Activated CD8-positive, alpha-beta memory T cell treated with anti-CD3 and anti-CD28 coated beads, Interleukin-2, amount 10 ng/mL, durations not matched to agents 7 days and 5 days (primary cell): ENCODE measurements at regions of chr1 and their contacts with region 1.

Region 1: DNA sequence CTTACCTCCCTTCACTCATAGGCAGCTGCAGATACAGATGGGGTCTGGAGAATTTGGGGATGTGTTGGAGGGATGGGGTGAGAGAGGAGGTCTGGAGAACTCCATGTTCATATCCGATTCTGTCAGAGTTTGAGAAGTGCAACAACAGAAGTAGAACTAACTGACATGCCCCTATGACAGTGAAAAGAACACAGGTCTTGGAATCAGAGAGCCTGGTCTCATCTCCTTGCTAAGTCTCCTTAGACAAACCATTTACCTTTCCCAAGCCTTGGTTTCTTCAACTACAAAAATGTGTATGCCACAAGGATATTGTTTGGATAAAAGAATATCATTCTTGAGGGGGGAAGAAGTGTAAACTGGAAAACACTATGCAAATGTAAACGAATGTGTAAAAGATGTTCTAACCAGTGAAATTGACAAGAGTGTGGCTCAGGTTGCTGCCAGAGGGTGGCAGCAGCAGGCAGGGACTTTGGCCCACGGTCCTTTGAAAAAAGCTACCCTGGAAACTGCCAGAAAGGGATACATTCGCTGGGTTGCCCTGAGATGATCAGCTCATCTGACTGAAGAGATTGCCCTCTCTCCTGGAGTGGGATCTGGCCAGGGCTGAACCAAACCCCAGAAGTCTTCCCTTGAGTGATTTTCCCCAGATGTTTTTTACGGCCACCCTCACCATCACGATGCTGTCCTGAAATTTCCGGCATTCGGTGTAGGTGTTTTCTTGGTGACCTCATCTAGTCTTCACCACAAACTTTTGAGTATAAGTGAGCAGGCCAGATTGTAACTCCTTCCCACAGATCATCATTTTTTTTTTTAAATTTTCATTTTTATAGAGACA is 17.0 kb upstream of the CD2 start:
- DNase-seq: peak; percentile 89
- ATAC-seq: peak; percentile 59
- H3K4me3 Mint-ChIP-seq: peak overlapping the region; percentile 69
- H3K27ac Mint-ChIP-seq: peak overlapping the region; percentile 99
- H3K4me1 Mint-ChIP-seq: peaks cover 59% of the 10 kb centered on the region
- H3K27me3 Mint-ChIP-seq: no peaks in the 10 kb centered on the region

Region 2: GRCh38 chr1:116693759-116694482 is 43.3 kb before region 1 on chr1:
- CTCF ChIA-PET with region 1: no interaction called
- DNase-seq: no peak
- ATAC-seq: no peak
- H3K4me3 Mint-ChIP-seq: no peak overlapping the region
- H3K27ac Mint-ChIP-seq: no peak overlapping the region
- H3K4me1 Mint-ChIP-seq: no peaks in the 10 kb centered on the region
- H3K27me3 Mint-ChIP-seq: no peaks in the 10 kb centered on the region

Region 3: GRCh38 chr1:116763787-116764465 is 26.7 kb after region 1 on chr1:
- CTCF ChIA-PET with region 1: interaction called, 317 read pairs
- DNase-seq: peak; percentile 83
- ATAC-seq: peak; percentile 20
- H3K4me3 Mint-ChIP-seq: peak overlapping the region; percentile 65
- H3K27ac Mint-ChIP-seq: peak overlapping the region; percentile 97
- H3K4me1 Mint-ChIP-seq: peaks cover 96% of the 10 kb centered on the region
- H3K27me3 Mint-ChIP-seq: no peaks in the 10 kb centered on the region

Region 4: DNA sequence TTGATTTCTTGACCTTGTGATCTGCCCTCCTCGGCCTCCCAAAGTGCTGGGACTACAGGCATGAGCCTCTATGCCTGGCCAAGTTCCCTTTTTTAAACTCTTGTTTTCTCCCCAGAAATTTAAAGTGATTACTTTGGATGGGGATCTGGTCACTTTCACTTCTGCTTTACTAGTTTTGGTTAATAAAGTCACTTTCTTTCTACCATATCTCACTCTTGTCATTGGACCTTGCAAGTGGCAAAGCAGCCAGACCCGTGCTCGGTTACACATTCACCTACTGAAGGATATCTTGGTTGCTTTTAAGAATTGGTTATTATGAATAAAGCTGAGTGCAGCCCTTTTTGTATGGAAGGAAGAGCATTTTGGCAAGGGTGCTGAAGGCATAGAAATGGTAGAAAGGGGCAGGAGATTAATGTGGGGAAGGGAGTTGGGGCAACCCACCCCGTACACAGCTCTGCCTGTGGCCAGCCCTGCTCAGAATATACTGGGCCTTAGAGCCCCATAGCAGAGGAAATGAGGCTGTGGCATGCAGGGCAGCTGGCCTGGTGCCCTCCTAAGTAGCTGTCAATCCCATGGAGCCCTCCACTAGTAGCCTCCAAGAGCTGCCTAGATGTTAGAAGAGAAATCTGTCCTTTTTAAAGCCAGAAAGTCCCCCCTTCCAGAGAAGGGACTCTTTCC is 57.7 kb after region 1 on chr1:
- CTCF ChIA-PET with region 1: interaction called, 16 read pairs
- DNase-seq: no peak
- ATAC-seq: no peak
- H3K4me3 Mint-ChIP-seq: no peak overlapping the region
- H3K27ac Mint-ChIP-seq: peak overlapping the region; percentile 47
- H3K4me1 Mint-ChIP-seq: peaks cover 75% of the 10 kb centered on the region
- H3K27me3 Mint-ChIP-seq: no peaks in the 10 kb centered on the region

Region 5: DNA sequence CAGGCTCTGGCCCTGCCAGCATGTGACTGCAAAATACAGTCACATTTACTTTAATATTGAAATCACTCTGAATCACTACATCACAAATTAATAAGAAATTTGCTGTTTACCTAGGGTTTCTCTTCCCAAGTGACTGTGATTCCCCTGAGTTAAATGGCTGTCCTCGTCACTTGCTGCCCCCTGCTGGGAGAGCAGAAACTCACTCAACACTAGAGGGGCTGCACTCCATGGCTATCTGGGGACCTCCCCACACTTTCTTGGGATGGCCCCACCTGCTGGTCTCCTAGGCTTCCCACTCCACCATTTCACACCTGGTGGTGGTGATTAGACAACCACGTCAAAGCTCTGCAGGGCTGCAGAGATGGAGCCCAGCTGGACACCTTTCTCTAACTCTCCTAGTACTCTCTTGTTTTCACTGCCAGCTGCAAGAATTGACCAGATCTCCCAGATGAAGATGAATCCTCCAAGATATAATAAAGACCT is 80.4 kb after region 1 on chr1:
- CTCF ChIA-PET with region 1: interaction called, 125 read pairs
- DNase-seq: peak; percentile 87
- ATAC-seq: peak; percentile 76
- H3K4me3 Mint-ChIP-seq: peak overlapping the region; percentile 33
- H3K27ac Mint-ChIP-seq: peak overlapping the region; percentile 81
- H3K4me1 Mint-ChIP-seq: peaks cover 65% of the 10 kb centered on the region
- H3K27me3 Mint-ChIP-seq: no peaks in the 10 kb centered on the region

Region 6: GRCh38 chr1:116881879-116882520 is 144.8 kb after region 1 on chr1:
- CTCF ChIA-PET with region 1: interaction called, 54 read pairs
- DNase-seq: peak; percentile 66
- ATAC-seq: peak; percentile 76
- H3K4me3 Mint-ChIP-seq: no peak overlapping the region
- H3K27ac Mint-ChIP-seq: no peak overlapping the region
- H3K4me1 Mint-ChIP-seq: peaks cover 7% of the 10 kb centered on the region
- H3K27me3 Mint-ChIP-seq: no peaks in the 10 kb centered on the region

Region 7: GRCh38 chr1:117059678-117060440 is 322.6 kb after region 1 on chr1 and contains the start of gene TTF2:
- CTCF ChIA-PET with region 1: interaction called, 55 read pairs
- DNase-seq: peak; percentile 99
- ATAC-seq: peak; percentile 91
- H3K4me3 Mint-ChIP-seq: no peak within 1 kb of the TSS
- H3K27ac Mint-ChIP-seq: no peak within 1 kb of the TSS
- H3K4me1 Mint-ChIP-seq: peaks cover 55% of the 10 kb centered on the region
- H3K27me3 Mint-ChIP-seq: no peaks in the 10 kb centered on the region
- total RNA-seq, gene TTF2: 156 to 157 TPM